Caco-2 (cell line): ENCODE measurements at regions of chr20 and their contacts with region 1.

Region 1: GRCh38 chr20:17569616-17570346 is at the start of gene DSTN:
- DNase-seq: peak; percentile 99 to 100
- H3K4me3 ChIP-seq: peak within 1 kb of the TSS; percentile 98
- H3K4me3 Mint-ChIP-seq: peak within 1 kb of the TSS; percentile 73
- H3K27ac Mint-ChIP-seq: peak within 1 kb of the TSS; percentile 87
- H3K4me1 ChIP-seq: peaks cover 23% of the 10 kb centered on the region
- H3K4me1 Mint-ChIP-seq: peaks cover 32% of the 10 kb centered on the region
- H3K27me3 ChIP-seq: no peaks in the 10 kb centered on the region
- H3K27me3 Mint-ChIP-seq: no peaks in the 10 kb centered on the region
- CTCF ChIP-seq: no peak
- total RNA-seq, gene DSTN: 313 and 318 TPM in 2 replicates

Region 2: GRCh38 chr20:17530716-17531664 is 38.8 kb before region 1 on chr20 and contains the start of gene BFSP1:
- CTCF ChIA-PET with region 1: interaction called, 10 read pairs
- POLR2A ChIA-PET with region 1: interaction called, 22 read pairs
- intact Hi-C with region 1: no loop called
- DNase-seq: peak; percentile 63 to 77
- H3K4me3 ChIP-seq: peak within 1 kb of the TSS; percentile 81
- H3K4me3 Mint-ChIP-seq: peak within 1 kb of the TSS; percentile 88
- H3K27ac Mint-ChIP-seq: peak within 1 kb of the TSS; percentile 84
- H3K4me1 ChIP-seq: peaks cover 5% of the 10 kb centered on the region; the same call in 1 of the 2 replicates
- H3K4me1 Mint-ChIP-seq: peaks cover 13% of the 10 kb centered on the region
- H3K27me3 ChIP-seq: no peaks in the 10 kb centered on the region
- H3K27me3 Mint-ChIP-seq: no peaks in the 10 kb centered on the region
- CTCF ChIP-seq: no peak
- total RNA-seq, gene BFSP1: 20.4 and 22.7 TPM in 2 replicates

Region 3: DNA sequence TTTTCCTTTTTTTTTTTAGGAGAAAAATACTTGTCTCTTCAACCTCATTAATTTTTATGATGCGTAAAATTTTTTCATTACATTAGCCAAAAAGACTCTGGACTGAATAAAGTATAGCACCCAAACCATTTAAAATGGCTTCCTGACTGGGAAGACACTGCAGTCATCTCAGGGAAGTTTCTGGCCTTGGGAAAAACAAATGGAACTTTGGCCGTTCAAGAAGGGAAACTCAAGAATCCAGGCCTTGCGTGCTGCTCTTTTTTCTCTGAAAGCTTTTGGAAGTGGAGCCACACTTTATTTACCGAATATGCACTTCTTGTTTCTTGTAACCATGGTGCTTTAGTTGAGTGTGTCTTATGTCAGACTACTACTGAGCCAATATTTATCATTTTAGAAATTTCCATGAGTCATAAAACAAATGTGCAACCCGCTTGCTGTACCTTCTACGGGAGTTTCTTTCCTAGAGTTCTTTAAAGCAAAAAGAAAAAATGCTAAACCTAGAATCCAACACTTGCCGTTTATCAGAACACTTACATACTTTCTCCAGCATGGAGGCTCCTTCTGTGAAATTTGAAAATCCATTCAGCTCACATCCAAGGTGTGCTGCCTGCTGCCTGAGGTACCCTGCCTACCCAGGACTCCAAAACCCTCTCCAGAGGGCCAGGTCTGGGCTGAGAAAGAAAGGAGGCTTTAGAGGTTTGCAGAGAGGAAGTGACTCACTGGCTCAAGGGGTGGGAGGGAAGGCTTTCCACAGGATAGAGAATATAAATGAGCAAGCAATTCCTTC is 11.4 kb before region 1 on chr20:
- CTCF ChIA-PET with region 1: interaction called, 4 read pairs
- POLR2A ChIA-PET with region 1: interaction called, 8 read pairs
- intact Hi-C with region 1: loop called (anchors 1 kb)
- DNase-seq: no peak
- H3K4me3 ChIP-seq: no peak overlapping the region
- H3K4me3 Mint-ChIP-seq: no peak overlapping the region
- H3K27ac Mint-ChIP-seq: peak overlapping the region; percentile 53
- H3K4me1 ChIP-seq: peaks cover 17% of the 10 kb centered on the region
- H3K4me1 Mint-ChIP-seq: peaks cover 7% of the 10 kb centered on the region
- H3K27me3 ChIP-seq: no peaks in the 10 kb centered on the region
- H3K27me3 Mint-ChIP-seq: no peaks in the 10 kb centered on the region
- CTCF ChIP-seq: no peak

Region 4: GRCh38 chr20:17604852-17605660 is 35.3 kb after region 1 on chr20:
- CTCF ChIA-PET with region 1: interaction called, 12 read pairs
- POLR2A ChIA-PET with region 1: interaction called, 8 read pairs
- intact Hi-C with region 1: loop called (anchors 1 kb)
- DNase-seq: peak; percentile 37 to 60
- H3K4me3 ChIP-seq: no peak overlapping the region
- H3K4me3 Mint-ChIP-seq: peak overlapping the region; percentile 19
- H3K27ac Mint-ChIP-seq: peak overlapping the region; percentile 40
- H3K4me1 ChIP-seq: peaks cover 36% of the 10 kb centered on the region
- H3K4me1 Mint-ChIP-seq: peaks cover 37% of the 10 kb centered on the region
- H3K27me3 ChIP-seq: no peaks in the 10 kb centered on the region
- H3K27me3 Mint-ChIP-seq: no peaks in the 10 kb centered on the region
- CTCF ChIP-seq: no peak

Region 5: GRCh38 chr20:17634661-17635331 is 65.0 kb after region 1 on chr20:
- CTCF ChIA-PET with region 1: no interaction called
- POLR2A ChIA-PET with region 1: no interaction called
- intact Hi-C with region 1: no loop called
- DNase-seq: no peak
- H3K4me3 ChIP-seq: no peak overlapping the region
- H3K4me3 Mint-ChIP-seq: no peak overlapping the region
- H3K27ac Mint-ChIP-seq: no peak overlapping the region
- H3K4me1 ChIP-seq: no peaks in the 10 kb centered on the region
- H3K4me1 Mint-ChIP-seq: peaks cover 5% of the 10 kb centered on the region
- H3K27me3 ChIP-seq: no peaks in the 10 kb centered on the region
- H3K27me3 Mint-ChIP-seq: no peaks in the 10 kb centered on the region
- CTCF ChIP-seq: no peak

Region 6: DNA sequence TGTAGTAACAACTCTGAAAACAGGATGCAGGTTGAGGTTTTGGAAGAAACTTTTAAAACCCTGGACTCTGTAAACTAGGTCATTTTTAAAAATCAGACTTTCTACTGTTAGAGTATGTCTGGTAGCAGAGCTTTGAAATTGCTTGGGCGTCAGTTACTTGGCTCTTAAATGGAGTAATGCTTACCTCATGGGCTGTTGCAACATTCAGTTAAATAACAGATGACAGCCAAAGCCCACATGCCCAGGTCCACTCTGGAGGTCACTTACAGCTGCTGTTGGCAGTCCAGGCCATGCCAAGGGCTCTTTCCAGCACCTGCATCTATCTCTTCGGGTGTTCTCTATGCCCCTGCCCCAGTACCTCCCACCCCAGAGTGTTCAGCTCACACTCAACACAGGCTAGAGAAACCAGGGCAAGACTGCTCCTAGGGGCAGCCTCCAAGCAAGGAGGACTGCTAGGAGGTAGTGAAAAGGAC is 226.3 kb after region 1 on chr20:
- CTCF ChIA-PET with region 1: no interaction called
- POLR2A ChIA-PET with region 1: no interaction called
- intact Hi-C with region 1: no loop called
- DNase-seq: no peak
- H3K4me3 ChIP-seq: no peak overlapping the region
- H3K4me3 Mint-ChIP-seq: no peak overlapping the region
- H3K27ac Mint-ChIP-seq: no peak overlapping the region
- H3K4me1 ChIP-seq: peaks cover 12% of the 10 kb centered on the region
- H3K4me1 Mint-ChIP-seq: peaks cover 17% of the 10 kb centered on the region
- H3K27me3 ChIP-seq: no peaks in the 10 kb centered on the region
- H3K27me3 Mint-ChIP-seq: no peaks in the 10 kb centered on the region
- CTCF ChIP-seq: no peak

Region 7: DNA sequence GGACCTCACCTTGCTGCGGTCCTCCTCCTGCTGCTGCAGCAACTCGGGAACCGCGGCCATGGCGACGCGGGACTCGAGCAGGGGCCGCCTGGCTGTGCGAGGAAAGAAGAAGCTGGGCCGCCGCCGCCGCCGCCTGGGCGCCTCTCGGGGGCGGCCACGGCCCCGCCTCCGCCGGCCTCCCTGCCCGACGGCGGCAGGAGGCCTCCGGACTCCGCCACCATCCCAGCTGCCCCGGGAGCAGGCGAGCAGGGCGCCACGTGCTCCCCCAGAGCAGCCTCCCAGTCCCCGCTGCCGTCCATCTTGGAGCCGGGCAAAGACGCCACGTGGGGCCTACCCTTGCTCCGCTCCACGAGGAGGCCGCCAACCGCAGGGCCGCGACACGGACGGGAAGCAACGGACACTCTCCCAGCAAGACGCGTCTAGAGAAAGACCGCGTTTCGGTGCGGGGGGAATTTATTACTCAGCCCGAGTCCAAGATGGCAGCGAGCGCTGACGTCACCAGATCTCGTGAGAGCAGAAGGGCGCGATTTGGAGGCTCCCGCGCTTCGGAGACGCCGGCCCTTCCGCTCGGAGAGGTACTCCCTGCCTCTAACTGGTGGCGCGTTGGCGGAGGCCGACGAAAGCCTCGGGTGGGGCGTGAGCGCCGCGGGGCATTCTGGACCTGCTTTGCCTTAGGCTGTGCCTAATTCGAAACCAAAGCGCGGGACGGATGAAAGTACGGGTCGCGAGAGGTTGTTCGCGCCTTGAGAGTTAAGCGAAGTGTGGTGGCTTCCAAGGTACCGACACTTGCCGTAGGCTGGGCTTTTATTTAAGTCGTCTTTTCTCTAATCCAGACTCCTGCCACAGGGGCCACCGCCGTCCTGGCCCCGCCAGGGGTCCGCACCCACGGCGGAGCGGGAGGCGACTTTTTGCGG is 398.8 kb after region 1 on chr20 and contains the starts of genes MGME1 and SNX5:
- CTCF ChIA-PET with region 1: no interaction called
- POLR2A ChIA-PET with region 1: no interaction called
- intact Hi-C with region 1: loop called (anchors 5 kb)
- DNase-seq: peak; percentile 100
- H3K4me3 ChIP-seq: peak within 1 kb of the TSS; percentile 72
- H3K4me3 Mint-ChIP-seq: peak within 1 kb of the TSS; percentile 93
- H3K27ac Mint-ChIP-seq: peak within 1 kb of the TSS; percentile 99
- H3K4me1 ChIP-seq: peaks cover 51% of the 10 kb centered on the region
- H3K4me1 Mint-ChIP-seq: peaks cover 24% of the 10 kb centered on the region
- H3K27me3 ChIP-seq: no peaks in the 10 kb centered on the region
- H3K27me3 Mint-ChIP-seq: no peaks in the 10 kb centered on the region
- CTCF ChIP-seq: no peak
- total RNA-seq, gene MGME1: 44.3 and 50.5 TPM in 2 replicates
- total RNA-seq, gene SNX5: 275 and 299 TPM in 2 replicates